ENCODE measurements at regions of chr19 and their contacts with region 1.

Region 1: DNA sequence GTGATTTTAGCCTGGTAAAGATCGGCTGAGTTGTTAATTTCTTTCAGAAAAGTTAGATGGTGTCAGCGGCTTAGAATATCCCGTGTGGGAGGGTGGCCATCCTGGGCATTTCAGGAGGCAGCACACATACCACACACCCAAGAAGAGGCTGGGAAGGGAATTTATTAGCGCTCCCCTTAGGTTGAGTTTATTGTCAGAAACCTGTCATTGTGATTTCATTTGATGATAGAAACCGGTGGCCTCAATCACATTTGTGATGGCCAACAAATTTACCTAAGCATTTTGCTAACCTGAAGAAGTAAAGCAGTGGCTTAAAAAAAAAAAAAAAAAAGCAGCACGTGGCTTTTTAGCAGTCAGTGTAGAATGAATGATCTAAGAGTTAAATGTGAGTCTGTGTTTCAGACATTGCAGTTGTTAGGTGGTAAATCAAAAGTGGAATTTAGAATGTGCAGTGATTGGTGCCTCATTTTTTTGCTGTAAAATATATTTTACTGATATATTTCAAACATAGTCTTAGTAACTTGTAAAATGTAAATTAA is 2.7 kb downstream of the SIPA1L3 start:
- DNase-seq: no peak
- H3K4me3 ChIP-seq: no peak overlapping the region
- H3K27me3 ChIP-seq: no peaks in the 10 kb centered on the region
- CTCF ChIP-seq: no peak

Region 2: GRCh38 chr19:37770985-37771384 is 138.7 kb before region 1 on chr19:
- CTCF ChIA-PET with region 1: no interaction called
- POLR2A ChIA-PET with region 1: no interaction called
- DNase-seq: no peak
- H3K4me3 ChIP-seq: no peak overlapping the region
- H3K27me3 ChIP-seq: no peaks in the 10 kb centered on the region
- CTCF ChIP-seq: no peak

Region 3: GRCh38 chr19:37950471-37951175 is 40.9 kb after region 1 on chr19:
- CTCF ChIA-PET with region 1: no interaction called
- POLR2A ChIA-PET with region 1: interaction called, 18 read pairs
- DNase-seq: no peak
- H3K4me3 ChIP-seq: no peak overlapping the region
- H3K27me3 ChIP-seq: no peaks in the 10 kb centered on the region
- CTCF ChIP-seq: no peak

Measured in BJ (cell line).